ENCODE measurements at regions of chr10 and their contacts with region 1.

Region 1: DNA sequence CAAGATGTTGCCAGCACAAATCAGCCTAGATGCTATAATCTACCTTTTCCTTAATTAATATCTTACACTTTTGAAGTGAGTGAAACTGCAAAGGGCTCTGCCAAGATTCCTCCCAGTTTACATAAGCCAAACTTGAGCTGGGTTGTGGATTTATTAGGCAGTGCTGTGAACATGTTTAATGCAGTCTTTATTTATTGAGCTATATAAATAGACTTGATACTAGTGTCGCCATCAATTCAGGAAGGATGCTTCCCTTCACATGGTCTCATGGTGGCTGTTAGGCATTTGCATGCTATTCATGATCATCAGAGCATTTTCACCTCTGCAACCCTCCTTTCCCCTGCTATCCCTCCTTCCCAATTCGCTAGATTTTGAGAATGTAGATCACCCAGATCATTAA is 40.2 kb downstream of the PLEKHS1 start:
- DNase-seq: no peak
- ATAC-seq: no peak
- H3K4me3 ChIP-seq: no peak overlapping the region
- H3K4me3 Mint-ChIP-seq: no peak overlapping the region
- H3K27ac ChIP-seq: no peak overlapping the region
- H3K27ac Mint-ChIP-seq: no peak overlapping the region
- H3K4me1 ChIP-seq: no peaks in the 10 kb centered on the region
- H3K4me1 Mint-ChIP-seq: no peaks in the 10 kb centered on the region
- H3K27me3 ChIP-seq: peaks cover 7 to 8% of the 10 kb centered on the region in 2 experiments
- H3K27me3 Mint-ChIP-seq: peaks cover 54% of the 10 kb centered on the region
- CTCF ChIP-seq: no peak

Region 2: GRCh38 chr10:113704637-113705343 is 86.9 kb before region 1 on chr10:
- CTCF ChIA-PET with region 1: no interaction called
- POLR2A ChIA-PET with region 1: no interaction called
- intact Hi-C with region 1: no loop called
- DNase-seq: peak in 4 of 14 experiments; percentile 22 to 55 (median 40)
- ATAC-seq: no peak
- H3K4me3 ChIP-seq: no peak overlapping the region
- H3K4me3 Mint-ChIP-seq: no peak overlapping the region
- H3K27ac ChIP-seq: no peak overlapping the region
- H3K27ac Mint-ChIP-seq: no peak overlapping the region
- H3K4me1 ChIP-seq: peaks cover 20% of the 10 kb centered on the region
- H3K4me1 Mint-ChIP-seq: peaks cover 36% of the 10 kb centered on the region
- H3K27me3 ChIP-seq: no peaks in the 10 kb centered on the region
- H3K27me3 Mint-ChIP-seq: no peaks in the 10 kb centered on the region
- CTCF ChIP-seq: peak; percentile 36

Region 3: DNA sequence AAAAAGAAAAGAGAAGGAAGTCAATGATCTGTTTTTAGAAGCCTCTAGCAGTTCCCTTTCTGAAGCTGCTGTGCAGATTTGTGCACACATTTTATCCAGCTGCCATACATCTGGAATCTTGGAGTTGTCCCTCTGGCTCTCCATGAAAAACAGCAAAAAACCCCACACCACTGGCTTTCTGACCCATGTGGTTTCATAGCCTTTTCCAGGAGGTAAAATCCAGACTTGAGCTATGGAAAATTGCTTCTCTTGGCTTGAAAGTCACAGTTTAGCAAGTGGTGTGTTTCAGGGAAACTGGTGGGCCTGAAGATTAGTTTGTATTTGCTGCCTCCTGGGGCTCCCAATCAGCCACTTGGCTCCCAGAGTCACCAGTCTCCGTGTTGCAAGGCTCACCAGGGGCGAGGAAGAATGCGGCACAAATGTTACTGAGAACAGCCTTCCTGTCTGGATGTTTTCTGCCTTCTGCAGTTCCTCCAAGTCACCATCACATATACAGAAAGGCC is 201.8 kb after region 1 on chr10:
- CTCF ChIA-PET with region 1: no interaction called
- POLR2A ChIA-PET with region 1: no interaction called
- intact Hi-C with region 1: loop called in 1 of 2 experiments (anchors 10 kb)
- DNase-seq: peak in 2 of 14 experiments; percentile 13 to 23
- ATAC-seq: no peak
- H3K4me3 ChIP-seq: no peak overlapping the region
- H3K4me3 Mint-ChIP-seq: no peak overlapping the region
- H3K27ac ChIP-seq: no peak overlapping the region
- H3K27ac Mint-ChIP-seq: no peak overlapping the region
- H3K4me1 ChIP-seq: peaks cover 6% of the 10 kb centered on the region
- H3K4me1 Mint-ChIP-seq: no peaks in the 10 kb centered on the region
- H3K27me3 ChIP-seq: peaks cover 5 to 13% of the 10 kb centered on the region in 2 experiments
- H3K27me3 Mint-ChIP-seq: peaks cover 21% of the 10 kb centered on the region
- CTCF ChIP-seq: no peak

Measured in CD4-positive, alpha-beta T cell (primary cell).